WTC11 (cell line): ENCODE measurements at regions of chr7 and their contacts with region 1.

Region 1: GRCh38 chr7:129163875-129164544 is 19.5 kb downstream of the TSPAN33 start:
- DNase-seq: no peak
- ATAC-seq: no peak
- H3K4me3 Mint-ChIP-seq: no peak overlapping the region
- H3K27ac Mint-ChIP-seq: no peak overlapping the region
- H3K4me1 Mint-ChIP-seq: peaks cover 17% of the 10 kb centered on the region
- H3K27me3 Mint-ChIP-seq: no peaks in the 10 kb centered on the region
- CTCF ChIP-seq: peak; percentile 67

Region 2: DNA sequence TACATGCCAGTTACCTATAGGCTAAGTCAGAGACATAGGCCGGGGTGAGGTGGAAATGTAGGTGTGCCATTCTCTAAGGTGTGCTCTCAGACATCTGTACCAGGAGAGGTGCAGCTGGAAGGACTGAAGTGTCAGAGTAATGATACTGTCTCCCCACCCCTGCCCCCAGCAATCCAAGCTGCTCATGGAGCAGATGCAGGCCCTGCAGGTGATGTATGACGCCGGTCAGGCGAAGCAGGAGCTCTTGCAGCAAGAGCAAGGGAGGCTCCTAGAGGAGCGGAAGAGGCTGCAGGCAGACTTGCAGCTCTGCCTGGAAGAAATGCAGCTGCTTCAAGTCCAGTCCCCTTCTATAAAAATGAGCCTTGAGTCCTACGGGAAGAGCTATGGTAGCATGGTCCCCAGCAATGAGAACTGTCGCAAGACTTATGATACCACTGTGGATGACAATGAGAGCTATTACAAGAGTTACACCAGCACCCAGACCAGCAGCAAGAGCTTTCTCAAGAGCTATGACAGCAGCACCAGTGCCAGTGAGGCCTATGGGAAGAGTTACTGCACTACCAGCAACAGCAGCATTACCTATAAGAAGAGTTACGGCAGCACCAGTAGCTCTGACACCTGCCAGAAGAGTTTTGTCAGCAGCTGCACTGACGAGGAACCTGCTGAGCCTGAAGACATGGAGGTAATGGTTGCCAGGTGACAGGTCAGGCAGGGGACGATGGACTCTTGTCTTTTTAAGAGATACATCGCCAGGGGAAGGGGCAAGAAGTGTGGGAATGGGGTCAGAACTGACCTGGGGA is 352.2 kb before region 1 on chr7:
- CTCF ChIA-PET with region 1: no interaction called
- POLR2A ChIA-PET with region 1: no interaction called
- DNase-seq: no peak
- ATAC-seq: peak; percentile 28; the same call in 1 of the 2 replicates
- H3K4me3 Mint-ChIP-seq: no peak overlapping the region
- H3K27ac Mint-ChIP-seq: no peak overlapping the region
- H3K4me1 Mint-ChIP-seq: no peaks in the 10 kb centered on the region
- H3K27me3 Mint-ChIP-seq: no peaks in the 10 kb centered on the region
- CTCF ChIP-seq: no peak

Region 3: GRCh38 chr7:129126314-129126713 is 37.7 kb before region 1 on chr7:
- CTCF ChIA-PET with region 1: interaction called, 11 read pairs
- POLR2A ChIA-PET with region 1: interaction called, 3 read pairs
- DNase-seq: peak; percentile 63
- ATAC-seq: peak; percentile 98
- H3K4me3 Mint-ChIP-seq: no peak overlapping the region
- H3K27ac Mint-ChIP-seq: no peak overlapping the region
- H3K4me1 Mint-ChIP-seq: no peaks in the 10 kb centered on the region
- H3K27me3 Mint-ChIP-seq: peaks cover 19% of the 10 kb centered on the region
- CTCF ChIP-seq: no peak

Region 4: DNA sequence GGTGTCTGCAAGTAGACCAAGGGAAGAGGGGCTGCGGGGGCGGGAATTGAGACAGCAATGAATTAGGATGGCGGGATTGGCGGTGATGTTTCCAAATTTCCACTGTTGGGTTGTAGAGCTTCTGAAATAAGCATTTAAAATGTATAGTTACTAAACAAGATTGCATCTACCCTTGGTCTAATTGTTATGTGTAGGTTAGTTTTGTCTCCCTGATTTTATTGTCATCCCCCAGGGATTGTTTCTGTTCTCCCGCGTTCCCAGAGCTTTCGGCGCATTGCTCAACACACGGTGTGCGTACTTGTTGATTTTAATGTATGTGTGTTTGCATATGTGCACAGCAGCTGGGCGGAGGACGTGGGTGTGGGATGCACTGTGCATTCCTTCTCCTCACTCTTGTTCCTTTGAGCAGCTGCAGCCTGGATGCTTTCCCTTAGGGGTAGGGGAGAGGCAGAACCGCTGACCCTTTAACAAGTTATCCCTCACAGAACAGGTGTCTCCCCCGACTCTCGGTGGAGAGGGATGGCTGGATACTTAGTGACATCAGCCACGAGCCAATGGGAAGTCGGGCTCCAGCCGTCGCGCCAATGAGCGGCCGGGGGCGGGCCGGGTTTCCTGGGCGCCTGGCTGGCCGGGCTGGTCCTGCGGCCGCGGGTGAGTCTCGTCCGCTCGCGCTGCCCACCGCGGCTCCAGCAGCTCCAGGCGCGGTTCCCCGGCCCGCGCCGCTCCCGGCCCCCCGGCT is 19.7 kb before region 1 on chr7 and contains the start of gene TSPAN33:
- CTCF ChIA-PET with region 1: interaction called, 27 read pairs
- POLR2A ChIA-PET with region 1: interaction called, 3 read pairs
- DNase-seq: peak; percentile 88
- ATAC-seq: peak; percentile 98
- H3K4me3 Mint-ChIP-seq: peak within 1 kb of the TSS; percentile 78
- H3K27ac Mint-ChIP-seq: no peak within 1 kb of the TSS; the same call in 1 of the 2 replicates
- H3K4me1 Mint-ChIP-seq: peaks cover 14% of the 10 kb centered on the region
- H3K27me3 Mint-ChIP-seq: peaks cover 38% of the 10 kb centered on the region
- CTCF ChIP-seq: no peak
- total RNA-seq, gene TSPAN33: 30.0 to 42.9 TPM (median 39.8 TPM) in 3 replicates

Region 5: GRCh38 chr7:129188372-129188891 is 24.4 kb after region 1 on chr7 and contains the start of gene SMO:
- CTCF ChIA-PET with region 1: interaction called, 36 read pairs
- POLR2A ChIA-PET with region 1: interaction called, 27 read pairs
- DNase-seq: peak; percentile 90
- ATAC-seq: peak; percentile 85
- H3K4me3 Mint-ChIP-seq: peak within 1 kb of the TSS; percentile 96
- H3K27ac Mint-ChIP-seq: peak within 1 kb of the TSS; percentile 53; the same call in 1 of the 2 replicates
- H3K4me1 Mint-ChIP-seq: peaks cover 41% of the 10 kb centered on the region
- H3K27me3 Mint-ChIP-seq: peaks cover 30% of the 10 kb centered on the region
- CTCF ChIP-seq: no peak
- total RNA-seq, gene SMO: 56.9 to 61.4 TPM (median 60.3 TPM) in 3 replicates

Region 6: GRCh38 chr7:129210256-129210988 is 46.4 kb after region 1 on chr7:
- CTCF ChIA-PET with region 1: interaction called, 56 read pairs
- POLR2A ChIA-PET with region 1: interaction called, 5 read pairs
- DNase-seq: peak; percentile 91
- ATAC-seq: peak; percentile 90
- H3K4me3 Mint-ChIP-seq: no peak overlapping the region
- H3K27ac Mint-ChIP-seq: no peak overlapping the region; the same call in 1 of the 2 replicates
- H3K4me1 Mint-ChIP-seq: 0 out of 2 replicates have a peak, but pooled peaks cover 5% of the 10 kb centered on the region
- H3K27me3 Mint-ChIP-seq: no peaks in the 10 kb centered on the region
- CTCF ChIP-seq: peak; percentile 84